PC-9 (cell line): ENCODE measurements at regions of chr7 and their contacts with region 1.

Region 1: DNA sequence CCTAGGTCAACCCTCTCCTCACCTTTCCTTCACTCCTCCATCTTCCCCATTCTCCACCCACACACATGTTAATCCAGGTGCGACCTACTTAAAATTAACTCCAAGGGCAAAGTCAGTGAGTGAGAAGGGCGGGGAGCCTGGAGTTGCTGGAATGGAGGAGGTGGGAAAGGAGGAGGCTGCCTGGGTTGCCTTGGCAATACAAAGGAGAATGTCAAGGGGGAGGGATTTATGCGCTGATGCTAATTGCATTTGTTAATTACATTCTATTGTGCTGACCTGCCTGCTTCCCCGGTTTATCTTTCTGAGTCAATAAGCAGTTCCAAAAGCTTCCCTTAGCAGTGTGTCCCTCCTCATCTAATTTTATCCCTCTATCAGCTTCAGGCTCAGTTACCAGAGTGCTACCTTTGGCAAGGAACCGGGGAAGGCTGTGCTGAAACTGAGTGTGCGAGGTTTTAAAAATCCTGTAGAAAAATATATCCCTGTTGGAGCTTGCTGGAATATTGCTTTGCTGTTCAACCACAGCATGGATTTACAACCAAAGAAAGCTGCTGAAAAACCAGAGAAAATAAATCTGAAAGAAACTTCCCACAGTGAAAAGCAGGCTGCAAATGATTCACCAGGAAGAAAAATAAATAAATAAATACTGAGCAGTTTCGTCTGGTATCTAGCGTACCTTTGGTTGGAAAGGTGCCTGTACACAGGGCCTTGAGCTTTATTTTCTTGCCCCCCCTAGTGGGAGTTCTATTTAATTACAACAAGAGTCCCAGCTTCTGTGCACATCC is 113.2 kb upstream of the DGKB start:
- DNase-seq: peak; percentile 53 to 72
- H3K4me3 ChIP-seq: no peak overlapping the region
- H3K27ac ChIP-seq: no peak overlapping the region
- H3K4me1 ChIP-seq: no peaks in the 10 kb centered on the region; the same call in 1 of the 2 replicates
- H3K27me3 ChIP-seq: no peaks in the 10 kb centered on the region
- CTCF ChIP-seq: peak; percentile 89

Region 2: DNA sequence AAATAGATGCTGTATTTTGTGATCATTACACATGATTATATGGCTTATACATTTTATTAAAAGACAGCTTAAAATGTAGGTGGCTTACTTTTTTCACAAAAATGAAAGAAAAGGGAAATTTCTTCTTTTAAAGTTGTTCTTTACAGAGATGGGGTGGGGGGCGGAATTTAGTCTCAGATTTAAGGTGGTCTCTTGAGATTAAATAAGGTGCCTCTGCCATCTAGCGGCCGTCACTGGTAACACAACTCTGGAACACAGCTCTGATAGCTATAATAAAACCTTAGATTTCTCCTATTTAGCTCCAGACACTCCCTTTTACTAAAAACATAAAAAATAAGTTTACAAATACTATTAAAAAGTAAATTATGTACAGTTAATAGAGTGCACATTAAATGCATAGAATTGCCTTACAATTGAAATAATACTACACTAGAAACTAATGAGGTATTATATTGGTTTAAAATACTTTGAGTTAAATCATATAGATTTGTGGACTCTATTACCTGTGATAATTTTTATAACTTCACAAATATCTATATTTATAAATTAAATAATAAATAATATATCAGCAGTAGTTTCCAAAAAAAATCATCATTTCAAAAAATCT is 324.0 kb before region 1 on chr7:
- CTCF ChIA-PET with region 1: interaction called, 32 read pairs
- POLR2A ChIA-PET with region 1: no interaction called
- intact Hi-C with region 1: no loop called
- DNase-seq: peak in 1 of 2 experiments; percentile 33
- H3K4me3 ChIP-seq: no peak overlapping the region
- H3K27ac ChIP-seq: no peak overlapping the region
- H3K4me1 ChIP-seq: no peaks in the 10 kb centered on the region
- H3K27me3 ChIP-seq: no peaks in the 10 kb centered on the region
- CTCF ChIP-seq: peak; percentile 100

Region 3: DNA sequence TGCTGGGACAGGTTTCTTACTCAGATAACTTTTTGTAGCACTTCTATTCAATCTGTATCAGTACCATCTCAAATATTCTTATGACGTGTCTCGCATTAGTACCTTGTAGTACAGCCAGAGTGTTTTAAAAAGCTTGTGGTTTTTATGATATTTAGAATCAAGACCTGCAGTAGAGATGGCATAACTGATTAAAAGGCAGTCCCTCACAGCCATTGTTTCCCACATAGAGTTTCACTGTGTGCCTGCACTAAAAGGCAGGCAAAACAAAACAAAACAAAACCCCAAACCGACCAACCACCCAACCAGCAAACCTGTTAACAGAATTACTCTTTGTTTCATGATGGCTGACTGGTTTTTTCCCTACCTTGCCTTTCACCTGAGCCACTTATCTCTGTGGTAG is 108.2 kb after region 1 on chr7:
- CTCF ChIA-PET with region 1: no interaction called
- POLR2A ChIA-PET with region 1: no interaction called
- intact Hi-C with region 1: loop called (anchors 1 kb)
- DNase-seq: peak in 1 of 2 experiments; percentile 60
- H3K4me3 ChIP-seq: no peak overlapping the region
- H3K27ac ChIP-seq: no peak overlapping the region
- H3K4me1 ChIP-seq: no peaks in the 10 kb centered on the region
- H3K27me3 ChIP-seq: no peaks in the 10 kb centered on the region
- CTCF ChIP-seq: no peak

Region 4: DNA sequence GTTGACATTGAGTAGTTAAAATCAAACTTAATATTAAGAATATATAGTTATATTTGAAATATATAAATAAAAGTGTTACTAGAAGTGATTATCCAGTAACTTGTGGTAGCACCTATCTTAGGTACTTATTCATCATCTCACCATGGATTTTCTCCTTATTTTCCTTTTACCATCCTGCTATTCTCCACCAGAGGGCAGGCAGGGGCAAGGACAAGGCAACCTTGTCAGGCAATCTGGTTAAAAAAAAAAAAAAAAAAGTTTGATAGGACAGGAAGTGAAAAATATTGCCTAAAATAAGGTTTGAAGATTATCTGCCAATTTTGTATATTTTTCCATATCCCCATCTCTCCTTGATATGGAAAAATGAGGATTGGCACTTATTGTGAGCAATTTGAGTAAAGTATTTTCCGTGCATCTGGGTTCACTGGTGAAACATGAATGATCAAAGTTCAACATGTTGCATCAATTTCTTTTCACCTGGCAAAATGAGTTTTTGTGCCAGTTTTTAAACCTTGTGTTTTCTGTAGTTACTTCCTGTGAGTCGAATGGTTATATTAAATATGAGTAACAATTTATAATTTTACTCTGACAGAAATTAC is 289.4 kb after region 1 on chr7:
- CTCF ChIA-PET with region 1: no interaction called
- POLR2A ChIA-PET with region 1: no interaction called
- intact Hi-C with region 1: loop called (anchors 5 kb)
- DNase-seq: peak; percentile 46 to 50
- H3K4me3 ChIP-seq: no peak overlapping the region
- H3K27ac ChIP-seq: no peak overlapping the region
- H3K4me1 ChIP-seq: no peaks in the 10 kb centered on the region
- H3K27me3 ChIP-seq: no peaks in the 10 kb centered on the region
- CTCF ChIP-seq: peak; percentile 86

Region 5: DNA sequence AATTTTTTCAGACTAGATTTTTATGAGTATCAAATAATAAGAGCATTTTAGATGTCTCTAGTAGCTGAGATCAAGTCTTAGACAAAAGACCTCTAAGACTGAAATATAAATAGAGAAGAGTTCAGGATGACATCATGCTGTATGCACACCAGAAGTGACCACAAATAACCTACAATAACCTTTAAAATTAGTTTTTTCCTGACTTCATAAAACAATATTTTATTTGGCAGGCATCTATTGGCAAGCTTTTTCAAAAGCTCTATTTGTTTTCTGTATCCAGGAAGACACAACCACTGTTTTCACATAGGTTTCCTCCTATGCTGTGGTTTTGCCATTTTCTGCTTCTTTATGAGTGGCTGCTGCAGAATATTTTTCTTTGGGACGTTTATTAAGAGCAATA is 1046.5 kb after region 1 on chr7:
- CTCF ChIA-PET with region 1: no interaction called
- POLR2A ChIA-PET with region 1: no interaction called
- intact Hi-C with region 1: loop called (anchors 10 kb)
- DNase-seq: no peak
- H3K4me3 ChIP-seq: no peak overlapping the region
- H3K27ac ChIP-seq: no peak overlapping the region
- H3K4me1 ChIP-seq: no peaks in the 10 kb centered on the region
- H3K27me3 ChIP-seq: no peaks in the 10 kb centered on the region
- CTCF ChIP-seq: no peak